ENCODE measurements at regions of chr3 and their contacts with region 1.

Region 1: GRCh38 chr3:109882144-109882543 is 544.8 kb upstream of the DPPA4 start:
- DNase-seq: no peak

Region 2: GRCh38 chr3:109897734-109898133 is 15.6 kb after region 1 on chr3:
- intact Hi-C with region 1: loop called in 1 of 2 experiments (anchors 2 kb)
- DNase-seq: no peak

Region 3: GRCh38 chr3:109927161-109927560 is 45.0 kb after region 1 on chr3:
- intact Hi-C with region 1: no loop called
- DNase-seq: no peak